Motor neuron (in vitro differentiated cells): ENCODE measurements at regions of chr4 and their contacts with region 1.

Region 1: DNA sequence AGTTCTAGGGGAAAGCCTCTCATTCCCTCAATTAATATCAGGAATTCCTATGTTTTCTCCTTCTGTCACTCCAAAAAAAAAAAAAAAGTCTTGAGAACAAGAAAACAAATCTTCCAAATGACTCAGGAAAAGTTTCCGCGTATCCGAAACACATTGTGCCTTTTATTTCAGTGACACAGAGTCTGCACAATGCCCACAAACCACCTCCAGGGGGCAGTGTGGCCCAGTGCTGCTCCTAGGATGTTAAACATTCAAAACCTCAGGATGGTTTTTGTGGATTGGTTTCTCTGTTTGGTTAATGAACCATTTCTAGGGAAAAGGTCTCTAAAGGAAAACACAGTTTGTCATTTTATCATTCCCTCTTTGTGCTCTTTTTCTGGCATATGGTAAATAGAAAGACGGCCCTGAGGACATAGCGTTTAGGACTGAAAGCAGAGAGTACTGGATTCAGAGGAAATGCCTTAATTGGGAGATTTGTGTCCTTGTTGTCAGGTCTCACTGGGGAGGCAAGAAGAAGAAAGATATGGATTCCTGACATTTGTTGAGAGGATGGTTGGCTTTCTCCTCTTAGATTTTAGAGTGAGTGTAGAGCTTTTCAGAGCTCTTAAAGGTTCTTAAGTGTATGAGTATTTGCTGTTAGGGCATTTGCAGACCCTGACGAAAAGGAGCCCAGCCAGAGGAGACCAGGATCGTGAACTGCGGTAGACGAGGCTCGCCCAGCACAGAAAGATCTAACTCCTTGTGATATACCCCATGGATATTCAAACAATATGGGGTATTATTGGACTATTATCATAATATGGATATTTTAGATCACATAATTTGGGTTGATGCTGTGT is 65.7 kb upstream of the MAP9 start:
- ATAC-seq: peak; percentile 66 to 93 (median 78)
- H3K4me3 ChIP-seq: no peak overlapping the region
- H3K27ac ChIP-seq: no peak overlapping the region
- H3K4me1 ChIP-seq: peaks cover 5 to 6% of the 10 kb centered on the region in 2 donors

Region 2: DNA sequence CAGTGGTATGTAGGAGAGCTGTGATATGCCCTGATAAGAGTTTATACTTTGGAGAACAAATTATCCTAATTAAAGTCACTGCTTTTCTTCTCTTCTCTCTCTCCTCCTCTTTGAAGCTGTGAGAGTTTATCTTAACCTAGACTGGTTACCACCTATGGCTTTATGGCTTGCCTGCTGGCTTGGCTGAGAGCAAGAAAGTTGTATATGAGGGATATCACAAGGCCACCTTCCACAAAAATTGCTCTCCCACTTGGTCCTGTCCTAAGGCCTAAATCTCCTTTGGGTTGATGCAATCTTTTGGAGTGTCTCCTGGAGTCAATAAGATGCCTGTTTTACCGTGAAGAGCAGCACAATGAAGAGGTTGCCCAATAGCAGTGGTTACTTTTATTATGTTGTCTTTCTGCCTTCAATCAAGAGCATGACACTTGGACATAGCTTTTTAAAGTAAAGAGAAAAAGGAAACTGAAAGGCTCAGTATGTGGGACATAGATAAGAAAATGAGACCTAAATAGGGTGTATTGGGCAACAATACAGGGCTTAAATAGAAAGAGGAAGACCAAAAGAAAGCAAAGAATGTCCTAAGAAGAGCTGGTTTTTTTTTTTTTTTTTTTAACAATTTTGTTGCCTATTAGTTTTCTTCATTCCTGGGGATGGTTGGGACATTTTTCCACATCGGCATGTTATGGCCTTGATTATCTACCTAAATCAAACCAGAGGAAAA is 233.4 kb after region 1 on chr4:
- in situ Hi-C with region 1: no loop called
- ATAC-seq: no peak
- H3K4me3 ChIP-seq: no peak overlapping the region
- H3K27ac ChIP-seq: no peak overlapping the region
- H3K4me1 ChIP-seq: peaks cover 0 to 17% of the 10 kb centered on the region in 2 donors

Region 3: DNA sequence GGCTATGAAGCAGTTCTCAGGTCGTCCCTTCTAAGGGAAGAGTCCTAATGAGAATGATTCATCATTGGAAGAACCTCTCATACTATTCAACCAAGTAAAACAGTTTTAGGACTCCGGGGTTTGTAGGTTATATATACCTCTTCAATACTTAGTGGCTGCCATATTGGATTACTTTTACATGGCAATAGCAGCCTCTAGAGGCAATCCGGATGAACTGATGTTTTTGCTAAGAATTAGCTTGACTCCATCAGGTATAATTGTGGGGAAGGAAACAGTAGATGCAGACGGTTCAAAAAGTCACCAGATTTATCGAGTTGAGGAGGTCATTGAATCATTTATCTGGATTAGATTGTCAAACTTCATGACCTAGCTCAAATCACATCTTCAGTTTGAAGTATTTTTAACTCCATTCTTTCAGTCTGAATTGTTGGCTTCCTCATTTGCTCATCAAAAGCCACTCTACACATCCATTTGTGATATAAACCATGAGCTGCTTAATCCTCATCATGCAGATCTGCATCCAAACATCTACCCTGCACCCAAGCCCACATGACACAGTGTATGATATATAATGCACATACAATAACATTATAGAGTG is 344.7 kb after region 1 on chr4:
- in situ Hi-C with region 1: loop called in 4 of 9 experiments (anchors 10 to 25 kb)
- ATAC-seq: peak in 5 of 8 experiments; percentile 49 to 95 (median 87)
- H3K4me3 ChIP-seq: no peak overlapping the region
- H3K27ac ChIP-seq: no peak overlapping the region
- H3K4me1 ChIP-seq: peaks cover 0 to 13% of the 10 kb centered on the region in 2 donors

Region 4: GRCh38 chr4:155946486-155946885 is 504.0 kb after region 1 on chr4:
- in situ Hi-C with region 1: loop called in 1 of 9 experiments (anchors 25 kb)
- ATAC-seq: no peak
- H3K4me3 ChIP-seq: no peak overlapping the region
- H3K27ac ChIP-seq: no peak overlapping the region
- H3K4me1 ChIP-seq: peaks cover 0 to 9% of the 10 kb centered on the region in 2 donors